Ovary (tissue), 10 donors: ENCODE measurements at regions of chr17 and their contacts with region 1.

Region 1: DNA sequence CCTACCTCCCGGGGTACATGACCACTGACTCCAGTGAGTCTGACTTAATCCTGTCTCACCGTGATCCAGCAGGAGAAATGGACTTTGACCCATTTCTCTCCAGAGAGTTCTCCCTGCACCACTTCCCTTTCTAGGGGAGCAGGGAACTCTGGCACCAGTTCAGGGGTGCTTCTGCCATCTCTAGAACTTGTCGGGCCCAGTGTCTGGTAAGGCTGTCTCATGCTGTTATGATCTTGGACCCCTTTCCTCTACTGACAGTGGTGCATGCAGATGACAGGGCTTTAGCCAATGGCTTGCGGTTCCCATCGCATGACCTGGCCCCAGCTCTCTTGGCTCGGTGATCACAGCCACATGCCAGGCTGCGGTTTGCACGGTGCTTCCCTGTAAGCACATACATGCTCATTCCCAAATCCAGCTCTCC is 62.0 kb downstream of the SLC39A11 start:
- DNase-seq: no peak
- H3K4me3 ChIP-seq: no peak overlapping the region
- H3K27ac ChIP-seq: no peak overlapping the region
- H3K4me1 ChIP-seq: peaks cover 1% of the 10 kb centered on the region
- H3K27me3 ChIP-seq: no peaks in the 10 kb centered on the region
- CTCF ChIP-seq: no peak
- EP300 ChIP-seq: no peak
- POLR2A ChIP-seq: no peak

Region 2: DNA sequence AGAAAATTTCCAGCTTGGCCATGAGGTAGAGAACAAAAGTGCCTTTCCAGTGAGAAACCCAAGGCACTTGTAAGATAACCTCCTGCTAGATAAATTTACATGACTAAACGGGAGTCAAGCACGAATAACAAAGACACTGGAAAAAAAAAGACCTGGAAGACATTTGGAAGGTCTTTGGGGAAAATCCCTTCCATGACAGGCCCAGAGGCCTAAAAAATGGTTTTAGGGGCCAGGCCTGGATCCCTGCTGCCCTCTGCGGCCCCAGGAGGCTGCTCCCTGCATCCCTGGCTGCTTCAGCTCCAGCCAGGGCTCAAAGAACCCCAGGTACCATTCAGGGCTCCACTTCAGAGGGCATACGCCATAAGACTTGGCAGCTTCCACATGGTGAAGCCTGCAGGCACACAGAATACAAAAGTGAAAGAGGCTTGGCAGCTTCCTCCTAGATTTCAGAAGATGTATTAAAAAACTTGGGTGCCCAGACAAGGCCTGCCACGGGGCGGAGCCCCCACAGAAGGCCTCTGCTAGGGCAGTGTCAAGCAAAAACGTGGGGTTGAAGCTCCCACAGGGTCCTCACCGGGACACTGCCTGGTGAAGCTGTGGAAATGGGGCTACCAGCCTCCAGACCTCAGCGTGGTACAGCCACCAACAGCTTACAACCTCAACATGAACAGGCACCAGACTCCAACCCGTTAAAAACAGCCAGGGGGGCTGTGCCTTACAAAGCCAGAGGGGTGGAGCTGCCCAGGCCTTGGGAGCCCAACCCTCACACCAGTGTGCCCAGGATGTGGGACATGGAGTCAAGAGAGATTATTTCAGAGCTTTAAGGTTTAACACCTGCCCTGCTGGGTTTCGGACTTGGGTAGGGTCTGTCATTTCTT is 536.6 kb after region 1 on chr17:
- intact Hi-C with region 1: loop called in 1 of 4 experiments (anchors 5 kb)
- DNase-seq: no peak
- H3K4me3 ChIP-seq: no peak overlapping the region
- H3K27ac ChIP-seq: no peak overlapping the region
- H3K4me1 ChIP-seq: no peaks in the 10 kb centered on the region
- H3K27me3 ChIP-seq: no peaks in the 10 kb centered on the region
- CTCF ChIP-seq: no peak
- EP300 ChIP-seq: no peak
- POLR2A ChIP-seq: no peak